ENCODE measurements at regions of chr3 and their contacts with region 1.

Region 1: GRCh38 chr3:97901313-97902248 is 70.7 kb downstream of the RIOX2 start:
- DNase-seq: no peak
- H3K4me3 ChIP-seq: no peak overlapping the region
- H3K27ac ChIP-seq: peak overlapping the region; percentile 30 to 65
- H3K4me1 ChIP-seq: no peaks in the 10 kb centered on the region
- H3K27me3 ChIP-seq: no peaks in the 10 kb centered on the region
- CTCF ChIP-seq: no peak
- POLR2A ChIP-seq: no peak

Region 2: DNA sequence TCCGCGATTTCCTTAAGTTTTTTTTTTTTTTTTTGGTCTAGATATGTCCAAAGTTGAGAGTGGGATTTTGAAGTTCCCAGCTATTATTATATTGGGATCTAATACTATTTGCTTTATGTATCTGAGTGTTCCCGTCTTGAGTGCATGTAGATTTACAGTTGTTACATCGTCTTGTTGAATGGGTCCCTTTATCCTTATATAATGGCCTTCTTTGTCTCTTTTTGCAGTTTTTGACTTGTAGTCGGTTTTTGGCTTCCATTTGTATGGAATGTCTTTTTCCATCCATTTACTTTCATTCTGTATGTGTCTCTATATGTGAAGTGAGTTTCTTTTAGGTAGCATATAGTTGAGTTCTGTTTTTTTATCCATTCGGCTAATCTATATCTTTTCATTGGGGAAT is 44.2 kb before region 1 on chr3:
- intact Hi-C with region 1: loop called (anchors 2 kb)
- DNase-seq: no peak
- H3K4me3 ChIP-seq: no peak overlapping the region
- H3K27ac ChIP-seq: no peak overlapping the region
- H3K4me1 ChIP-seq: no peaks in the 10 kb centered on the region
- H3K27me3 ChIP-seq: no peaks in the 10 kb centered on the region
- CTCF ChIP-seq: no peak
- POLR2A ChIP-seq: no peak

Measured in breast epithelium (tissue), 4 donors.